ENCODE measurements at regions of chr15 and their contacts with region 1.

Region 1: DNA sequence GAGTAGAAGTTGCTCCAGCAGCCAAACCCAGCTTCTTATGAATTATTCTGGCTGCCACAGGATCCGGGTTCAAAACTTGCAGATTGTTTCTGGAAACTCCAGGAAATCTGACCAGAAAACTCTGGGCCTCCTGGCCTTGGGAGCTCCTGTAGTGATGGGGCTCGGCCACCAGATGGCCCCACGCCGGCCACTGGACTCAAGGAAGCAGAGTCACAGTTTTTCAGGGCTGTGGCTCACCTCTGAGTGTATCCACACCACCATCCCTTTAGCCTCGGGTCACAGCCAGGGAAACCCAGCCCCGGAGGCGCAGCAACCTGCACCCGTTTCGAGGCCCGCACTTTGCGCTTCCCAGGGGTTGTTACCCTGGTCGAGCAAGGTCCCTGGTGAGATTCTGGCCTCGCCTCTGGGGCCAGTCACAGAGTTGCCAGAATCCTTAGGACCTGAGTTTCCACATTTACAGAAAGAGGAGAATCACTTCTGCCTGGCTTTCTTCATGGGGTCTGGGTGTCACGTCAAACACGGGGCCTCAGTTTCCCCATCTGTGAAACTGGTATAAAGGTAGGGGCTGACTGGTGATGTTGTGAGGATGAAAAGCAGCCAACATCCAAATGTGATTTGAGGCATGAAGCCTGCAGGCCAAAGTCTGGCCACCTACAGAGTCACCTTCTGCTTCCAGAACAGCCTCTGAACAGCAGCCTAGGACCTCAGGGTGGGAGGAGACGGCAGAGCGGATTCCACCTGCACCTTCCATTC is 53.5 kb upstream of the LCTL start:
- DNase-seq: peak; percentile 84
- H3K4me3 ChIP-seq: no peak overlapping the region
- H3K27ac ChIP-seq: peak overlapping the region; percentile 8 to 82 (median 58)
- H3K4me1 ChIP-seq: peaks cover 10 to 52% (median 36%) of the 10 kb centered on the region in 4 donors
- H3K27me3 ChIP-seq: peaks cover 6% of the 10 kb centered on the region
- CTCF ChIP-seq: peak; percentile 86 to 94 (median 92)
- EP300 ChIP-seq: no peak
- POLR2A ChIP-seq: no peak

Region 2: GRCh38 chr15:66700802-66701421 is 81.6 kb after region 1 on chr15:
- in situ Hi-C with region 1: no loop called
- intact Hi-C with region 1: loop called (anchors 5 kb)
- DNase-seq: peak; percentile 97
- H3K4me3 ChIP-seq: peak overlapping the region; percentile 59 to 78 (median 73)
- H3K27ac ChIP-seq: peak overlapping the region; percentile 84 to 92 (median 91)
- H3K4me1 ChIP-seq: peaks cover 3 to 39% (median 31%) of the 10 kb centered on the region in 4 donors
- H3K27me3 ChIP-seq: no peaks in the 10 kb centered on the region
- CTCF ChIP-seq: no peak
- EP300 ChIP-seq: no peak
- POLR2A ChIP-seq: no peak

Measured in transverse colon (tissue), 4 donors.